Common myeloid progenitor, CD34-positive (primary cell): ENCODE measurements at regions of chr3 and their contacts with region 1.

Region 1: GRCh38 chr3:119841803-119842477 is 60.0 kb downstream of the NR1I2 start:
- DNase-seq: no peak
- H3K4me3 ChIP-seq: no peak overlapping the region
- H3K27ac ChIP-seq: peak overlapping the region in 1 of 2 experiments; percentile 74
- H3K4me1 ChIP-seq: peaks cover 4 to 31% (median 14%) of the 10 kb centered on the region in 4 experiments
- H3K27me3 ChIP-seq: no peaks in the 10 kb centered on the region

Region 2: GRCh38 chr3:119690043-119690656 is 151.8 kb before region 1 on chr3:
- CTCF ChIA-PET with region 1: no interaction called
- POLR2A ChIA-PET with region 1: no interaction called
- DNase-seq: peak in 2 of 3 donors; percentile 22 to 31
- H3K4me3 ChIP-seq: no peak overlapping the region
- H3K27ac ChIP-seq: no peak overlapping the region
- H3K4me1 ChIP-seq: no peaks in the 10 kb centered on the region
- H3K27me3 ChIP-seq: no peaks in the 10 kb centered on the region

Region 3: DNA sequence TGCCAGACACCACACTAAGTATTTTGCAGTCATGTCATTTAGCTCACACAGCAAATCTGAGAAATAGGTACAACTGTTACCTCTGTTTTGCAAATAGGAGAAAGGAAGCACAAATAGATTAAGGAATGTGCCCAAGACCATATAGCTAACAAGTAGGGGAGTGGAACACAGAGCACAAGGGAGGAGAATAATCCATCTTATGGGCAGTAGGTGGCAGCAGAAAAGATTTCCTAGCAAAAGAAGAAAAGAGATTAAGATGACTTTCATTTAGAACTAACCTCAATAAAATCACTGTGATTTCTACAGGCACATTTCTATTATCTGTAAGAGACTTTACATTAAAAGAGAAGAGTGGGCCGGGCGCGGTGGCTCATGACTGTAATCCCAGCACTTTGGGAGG is 10.9 kb before region 1 on chr3:
- CTCF ChIA-PET with region 1: interaction called, 17 read pairs
- POLR2A ChIA-PET with region 1: no interaction called
- DNase-seq: peak in 1 of 3 donors; percentile 16
- H3K4me3 ChIP-seq: no peak overlapping the region
- H3K27ac ChIP-seq: no peak overlapping the region
- H3K4me1 ChIP-seq: peaks cover 2 to 20% (median 9%) of the 10 kb centered on the region in 4 experiments
- H3K27me3 ChIP-seq: no peaks in the 10 kb centered on the region

Region 4: GRCh38 chr3:119891944-119892721 is 50.2 kb after region 1 on chr3:
- CTCF ChIA-PET with region 1: no interaction called
- POLR2A ChIA-PET with region 1: no interaction called
- DNase-seq: peak; percentile 73 to 89 (median 87)
- H3K4me3 ChIP-seq: peak overlapping the region in 1 of 7 experiments; percentile 17
- H3K27ac ChIP-seq: no peak overlapping the region
- H3K4me1 ChIP-seq: peaks cover 0 to 3% (median 0%) of the 10 kb centered on the region in 4 experiments
- H3K27me3 ChIP-seq: no peaks in the 10 kb centered on the region